T-cell (primary cell): ENCODE measurements at regions of chr2 and their contacts with region 1.

Region 1: DNA sequence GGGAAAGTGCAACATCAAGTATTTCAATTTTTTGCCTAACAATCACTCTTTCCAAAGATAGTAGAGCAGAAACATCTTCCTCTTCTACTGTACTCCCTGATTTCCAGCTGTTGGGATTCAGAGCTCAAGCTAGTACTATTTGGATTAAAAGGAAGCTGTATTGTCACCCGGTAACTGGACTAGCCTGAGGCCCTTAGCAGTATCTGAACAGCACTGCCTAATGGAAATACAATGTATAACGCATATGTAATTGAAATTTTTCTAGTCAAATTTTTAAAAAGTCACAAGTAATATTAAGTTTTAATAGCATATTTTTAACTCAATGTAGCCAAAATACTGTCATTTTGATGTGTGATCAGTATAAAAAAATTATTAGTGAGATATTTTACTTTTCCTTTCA is 86.2 kb downstream of the COX7A2L start:
- DNase-seq: no peak
- ATAC-seq: no peak
- H3K4me3 ChIP-seq: no peak overlapping the region
- H3K4me3 Mint-ChIP-seq: no peak overlapping the region
- H3K27ac ChIP-seq: no peak overlapping the region
- H3K27ac Mint-ChIP-seq: peak overlapping the region; percentile 56 to 61
- H3K4me1 ChIP-seq: no peaks in the 10 kb centered on the region
- H3K4me1 Mint-ChIP-seq: peaks cover 9 to 24% (median 14%) of the 10 kb centered on the region in 3 donors
- H3K27me3 ChIP-seq: no peaks in the 10 kb centered on the region
- H3K27me3 Mint-ChIP-seq: no peaks in the 10 kb centered on the region

Region 2: DNA sequence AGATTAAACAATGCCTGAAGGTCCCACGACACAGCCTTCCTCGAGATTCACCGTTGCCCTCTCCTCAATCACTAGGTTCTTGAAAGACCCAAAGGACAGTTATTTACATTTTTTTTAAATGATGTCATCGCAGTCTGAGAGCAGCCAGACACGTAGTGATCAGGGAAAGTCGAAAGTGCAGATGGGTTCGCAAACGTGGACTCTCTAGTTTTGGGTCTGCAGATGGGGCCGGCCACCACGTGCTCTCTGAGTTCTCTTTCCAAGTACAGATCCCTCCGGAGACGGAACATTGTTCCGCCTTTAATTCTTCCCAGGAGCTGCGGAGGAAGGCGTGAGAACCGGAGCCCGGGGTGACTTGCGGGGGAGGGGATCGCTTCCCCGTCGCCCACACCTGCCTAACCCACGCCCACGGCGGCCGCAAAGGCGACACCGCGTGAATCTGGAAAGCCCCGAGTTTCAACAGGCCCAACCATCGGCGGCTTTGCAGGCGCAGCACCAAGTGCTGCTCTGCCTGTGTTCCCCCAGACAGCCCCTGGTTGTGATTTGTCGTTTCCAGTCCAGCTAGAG is 172.8 kb before region 1 on chr2:
- CTCF ChIA-PET with region 1: no interaction called
- POLR2A ChIA-PET with region 1: no interaction called
- DNase-seq: peak; percentile 79 to 98 (median 96)
- ATAC-seq: peak; percentile 68 to 81 (median 70)
- H3K4me3 ChIP-seq: peak overlapping the region in 1 of 2 donors; percentile 46
- H3K4me3 Mint-ChIP-seq: peak overlapping the region in 2 of 3 donors; percentile 83
- H3K27ac ChIP-seq: peak overlapping the region; percentile 99
- H3K27ac Mint-ChIP-seq: no peak overlapping the region
- H3K4me1 ChIP-seq: peaks cover 66 to 97% of the 10 kb centered on the region in 2 experiments
- H3K4me1 Mint-ChIP-seq: peaks cover 48% of the 10 kb centered on the region in 3 donors
- H3K27me3 ChIP-seq: no peaks in the 10 kb centered on the region
- H3K27me3 Mint-ChIP-seq: no peaks in the 10 kb centered on the region

Region 3: GRCh38 chr2:42238644-42239288 is 36.1 kb before region 1 on chr2:
- CTCF ChIA-PET with region 1: interaction called, 5 to 10 read pairs
- POLR2A ChIA-PET with region 1: interaction called in 1 of 2 experiments, 6 read pairs
- DNase-seq: peak in 31 of 35 experiments; percentile 5 to 57 (median 28)
- ATAC-seq: peak; percentile 64 to 83 (median 74)
- H3K4me3 ChIP-seq: no peak overlapping the region
- H3K4me3 Mint-ChIP-seq: peak overlapping the region in 1 of 3 donors; percentile 21
- H3K27ac ChIP-seq: no peak overlapping the region
- H3K27ac Mint-ChIP-seq: peak overlapping the region; percentile 52 to 66
- H3K4me1 ChIP-seq: peaks cover 2 to 25% of the 10 kb centered on the region in 2 experiments
- H3K4me1 Mint-ChIP-seq: peaks cover 92 to 94% (median 94%) of the 10 kb centered on the region in 3 donors
- H3K27me3 ChIP-seq: no peaks in the 10 kb centered on the region
- H3K27me3 Mint-ChIP-seq: no peaks in the 10 kb centered on the region